Right ventricle myocardium inferior (tissue), 1 donor: ENCODE measurements at regions of chr11 and their contacts with region 1.

Region 1: GRCh38 chr11:114889594-114890011 is 211.3 kb downstream of the NXPE2 start:
- DNase-seq: no peak
- ATAC-seq: peak; percentile 55

Region 2: GRCh38 chr11:114796954-114797721 is 92.5 kb before region 1 on chr11:
- intact Hi-C with region 1: loop called (anchors 5 kb)
- DNase-seq: no peak
- ATAC-seq: peak; percentile 76